ENCODE measurements at regions of chr2 and their contacts with region 1.

Region 1: DNA sequence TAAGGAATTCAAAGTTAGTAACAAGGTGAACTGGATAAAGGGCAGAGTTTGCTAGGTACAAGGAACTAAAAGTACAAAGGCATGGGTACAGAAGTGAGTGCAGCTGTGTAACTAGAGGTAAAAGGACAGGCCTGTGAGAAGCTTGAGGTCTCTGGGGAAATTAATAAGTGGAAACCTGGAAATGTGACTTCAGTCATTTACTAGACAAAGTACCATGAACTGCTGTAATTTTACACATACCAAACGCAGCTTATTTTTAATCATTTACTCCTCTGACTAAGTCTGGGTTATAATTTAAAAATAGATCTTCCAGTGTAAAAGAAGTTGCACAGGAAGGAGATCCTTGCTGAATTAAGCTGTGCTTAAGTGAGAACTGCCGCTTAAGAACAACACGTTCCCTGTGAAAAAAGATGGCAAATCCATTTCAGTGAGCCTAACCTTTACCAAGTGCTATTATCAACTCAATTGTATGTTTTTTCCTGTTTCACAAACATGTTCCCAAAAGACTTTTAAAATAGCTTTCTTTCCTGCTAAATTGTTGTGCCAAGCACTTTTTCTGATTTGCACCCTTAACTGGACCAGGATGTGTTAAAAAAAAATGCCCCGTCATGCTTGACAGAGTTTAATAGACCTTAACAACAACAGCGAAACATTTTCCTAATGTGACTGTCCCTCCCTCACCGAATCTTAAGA is 44.3 kb downstream of the CALCRL start:
- DNase-seq: peak; percentile 15
- ATAC-seq: peak; percentile 57
- H3K4me3 ChIP-seq: no peak overlapping the region
- H3K27ac ChIP-seq: no peak overlapping the region
- H3K4me1 ChIP-seq: no peaks in the 10 kb centered on the region
- H3K27me3 ChIP-seq: no peaks in the 10 kb centered on the region
- CTCF ChIP-seq: no peak
- EP300 ChIP-seq: no peak
- POLR2A ChIP-seq: no peak
- RAD21 ChIP-seq: no peak

Region 2: DNA sequence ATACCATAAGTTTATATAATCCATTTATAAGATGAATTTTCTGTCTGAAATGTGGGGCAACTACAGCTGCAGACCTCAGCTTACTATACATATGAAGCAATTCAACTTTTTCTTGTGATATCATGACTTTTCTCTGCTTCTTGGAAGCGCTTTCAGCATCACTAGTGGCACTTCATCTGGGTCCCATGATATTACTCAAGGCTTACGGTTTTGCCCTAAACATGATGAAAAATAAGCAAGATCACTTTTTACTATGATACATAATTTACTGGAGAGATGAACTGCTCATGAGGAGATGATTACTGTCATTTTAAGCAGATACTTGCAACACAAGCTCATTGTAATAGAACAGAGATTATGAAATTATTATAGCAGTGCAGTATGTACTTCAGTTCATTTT is 296.7 kb before region 1 on chr2:
- CTCF ChIA-PET with region 1: no interaction called
- POLR2A ChIA-PET with region 1: no interaction called
- RAD21 ChIA-PET with region 1: no interaction called
- SMC1A ChIA-PET with region 1: no interaction called
- in situ Hi-C with region 1: no loop called
- intact Hi-C with region 1: no loop called
- DNase-seq: no peak
- ATAC-seq: no peak
- H3K4me3 ChIP-seq: no peak overlapping the region
- H3K27ac ChIP-seq: no peak overlapping the region
- H3K4me1 ChIP-seq: no peaks in the 10 kb centered on the region
- H3K27me3 ChIP-seq: no peaks in the 10 kb centered on the region
- CTCF ChIP-seq: no peak
- EP300 ChIP-seq: no peak
- POLR2A ChIP-seq: no peak
- RAD21 ChIP-seq: no peak

Region 3: DNA sequence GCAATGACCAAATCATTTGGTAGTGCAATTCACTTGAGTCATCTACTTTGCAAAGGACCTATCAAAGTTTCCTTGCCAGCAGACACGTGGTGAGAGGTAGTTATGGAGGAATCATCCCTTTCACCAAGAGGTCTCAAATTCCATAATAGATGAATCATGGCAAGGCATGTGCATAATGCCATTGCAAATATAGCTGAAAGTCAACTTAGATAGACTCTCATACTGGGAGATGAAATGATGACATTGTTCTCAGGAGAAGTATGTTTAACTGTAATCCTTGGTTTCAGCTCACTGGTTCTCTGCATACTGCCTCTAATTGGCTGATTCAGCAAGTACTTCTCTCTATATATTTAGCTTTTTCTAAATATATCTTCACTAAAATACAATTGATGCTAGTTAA is 12.8 kb before region 1 on chr2:
- CTCF ChIA-PET with region 1: interaction called, 6 read pairs
- POLR2A ChIA-PET with region 1: interaction called, 4 read pairs
- RAD21 ChIA-PET with region 1: interaction called, 19 read pairs
- SMC1A ChIA-PET with region 1: interaction called, 20 read pairs
- in situ Hi-C with region 1: no loop called
- intact Hi-C with region 1: no loop called
- DNase-seq: no peak
- ATAC-seq: no peak
- H3K4me3 ChIP-seq: no peak overlapping the region
- H3K27ac ChIP-seq: no peak overlapping the region
- H3K4me1 ChIP-seq: no peaks in the 10 kb centered on the region
- H3K27me3 ChIP-seq: no peaks in the 10 kb centered on the region
- CTCF ChIP-seq: no peak
- EP300 ChIP-seq: no peak
- POLR2A ChIP-seq: no peak
- RAD21 ChIP-seq: no peak

Measured in GM12878 (cell line).